Esophagus muscularis mucosa (tissue), 4 donors: ENCODE measurements at regions of chrX and their contacts with region 1.

Region 1: DNA sequence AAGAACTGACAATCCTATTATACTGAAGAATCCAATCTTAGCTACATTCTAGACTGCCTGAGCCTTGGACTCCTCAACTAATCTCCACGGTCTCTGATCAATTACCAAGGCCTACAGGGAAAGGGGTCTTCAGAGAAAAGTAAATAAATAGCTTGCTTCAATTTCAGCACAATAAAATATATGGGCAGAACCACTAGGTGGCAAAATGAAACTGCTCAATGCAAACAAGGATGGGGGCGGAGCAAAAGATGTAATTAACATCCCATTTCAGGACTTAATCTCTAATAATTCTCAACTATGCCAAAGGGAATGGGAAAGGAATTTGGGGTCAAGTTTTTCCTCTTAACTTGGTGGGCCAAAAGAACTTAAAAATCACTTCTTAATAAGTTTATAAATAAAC is 78.4 kb upstream of the MAP3K15 start:
- DNase-seq: no peak
- H3K4me3 ChIP-seq: no peak overlapping the region
- H3K27ac ChIP-seq: no peak overlapping the region
- H3K4me1 ChIP-seq: peaks cover 0 to 4% (median 0%) of the 10 kb centered on the region in 4 donors
- H3K27me3 ChIP-seq: no peaks in the 10 kb centered on the region
- CTCF ChIP-seq: peak; percentile 34 to 46 (median 43)
- EP300 ChIP-seq: no peak
- POLR2A ChIP-seq: no peak

Region 2: GRCh38 chrX:19725641-19726040 is 132.0 kb after region 1 on chrX:
- intact Hi-C with region 1: loop called (anchors 10 kb)
- DNase-seq: no peak
- H3K4me3 ChIP-seq: no peak overlapping the region
- H3K27ac ChIP-seq: no peak overlapping the region
- H3K4me1 ChIP-seq: peaks cover 0 to 2% (median under 1%) of the 10 kb centered on the region in 4 donors
- H3K27me3 ChIP-seq: peaks cover 0 to 5% (median 0%) of the 10 kb centered on the region in 4 donors
- CTCF ChIP-seq: no peak
- EP300 ChIP-seq: no peak
- POLR2A ChIP-seq: no peak